ENCODE measurements at regions of chr10 and their contacts with region 1.

Region 1: GRCh38 chr10:70381471-70382421 is 679 bp downstream of the LRRC20 start:
- DNase-seq: peak; percentile 37 to 94 (median 55)

Region 2: DNA sequence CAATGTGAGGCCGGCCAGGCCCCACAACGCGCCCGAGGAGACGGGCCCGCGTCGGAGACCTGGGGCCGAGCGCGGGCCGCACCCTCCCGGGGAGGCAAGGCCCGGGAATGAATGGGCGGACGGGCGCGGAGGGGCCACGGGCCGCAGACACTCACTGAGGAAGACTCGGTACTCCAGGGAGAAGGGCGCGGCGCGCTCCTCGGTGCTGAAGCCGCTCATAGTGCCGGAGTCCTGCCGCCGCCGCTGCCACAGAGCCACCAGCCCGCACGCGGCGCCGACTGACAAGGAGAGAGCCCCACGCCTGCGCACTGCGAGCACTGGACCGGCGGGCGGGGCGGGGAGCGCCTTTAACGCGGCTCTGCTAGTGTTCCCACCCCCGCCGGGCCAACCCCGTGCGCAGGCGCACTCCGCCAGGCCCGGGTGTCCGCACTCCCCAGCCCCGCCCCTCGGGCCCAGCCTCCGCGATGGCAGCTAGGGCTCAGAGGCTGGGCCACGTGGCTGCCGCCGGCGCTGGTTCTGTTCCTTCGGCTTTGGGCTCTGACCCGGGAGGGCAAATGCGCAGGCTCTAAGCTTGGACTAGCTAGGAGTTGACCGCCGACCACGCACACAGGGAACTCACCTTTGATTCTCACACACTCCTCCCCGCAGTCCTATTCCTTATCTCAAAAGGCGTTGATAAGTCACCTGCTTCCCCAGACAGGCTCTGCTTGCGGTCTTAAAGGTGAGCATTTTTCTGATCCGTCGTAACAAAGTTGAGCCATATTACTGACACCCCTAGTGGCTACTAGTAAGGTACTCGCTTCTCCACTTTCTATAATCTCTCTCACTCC is 148.4 kb before region 1 on chr10 and contains the start of gene PPA1:
- intact Hi-C with region 1: loop called (anchors 5 kb)
- DNase-seq: peak; percentile 98 to 100 (median 99)

Region 3: GRCh38 chr10:70404036-70404786 is 22.5 kb after region 1 on chr10 and contains the start of gene EIF4EBP2:
- intact Hi-C with region 1: loop called (anchors 1 kb)
- DNase-seq: peak; percentile 97 to 100 (median 99)

Region 4: GRCh38 chr10:70619271-70620019 is 237.7 kb after region 1 on chr10:
- intact Hi-C with region 1: no loop called
- DNase-seq: no peak

Measured in posterior cingulate gyrus (tissue), 11 donors.